Activated CD4-positive, alpha-beta memory T cell treated with anti-CD3 and anti-CD28 coated beads for 36 hours (primary cell): ENCODE measurements at regions of chr2 and their contacts with region 1.

Region 1: DNA sequence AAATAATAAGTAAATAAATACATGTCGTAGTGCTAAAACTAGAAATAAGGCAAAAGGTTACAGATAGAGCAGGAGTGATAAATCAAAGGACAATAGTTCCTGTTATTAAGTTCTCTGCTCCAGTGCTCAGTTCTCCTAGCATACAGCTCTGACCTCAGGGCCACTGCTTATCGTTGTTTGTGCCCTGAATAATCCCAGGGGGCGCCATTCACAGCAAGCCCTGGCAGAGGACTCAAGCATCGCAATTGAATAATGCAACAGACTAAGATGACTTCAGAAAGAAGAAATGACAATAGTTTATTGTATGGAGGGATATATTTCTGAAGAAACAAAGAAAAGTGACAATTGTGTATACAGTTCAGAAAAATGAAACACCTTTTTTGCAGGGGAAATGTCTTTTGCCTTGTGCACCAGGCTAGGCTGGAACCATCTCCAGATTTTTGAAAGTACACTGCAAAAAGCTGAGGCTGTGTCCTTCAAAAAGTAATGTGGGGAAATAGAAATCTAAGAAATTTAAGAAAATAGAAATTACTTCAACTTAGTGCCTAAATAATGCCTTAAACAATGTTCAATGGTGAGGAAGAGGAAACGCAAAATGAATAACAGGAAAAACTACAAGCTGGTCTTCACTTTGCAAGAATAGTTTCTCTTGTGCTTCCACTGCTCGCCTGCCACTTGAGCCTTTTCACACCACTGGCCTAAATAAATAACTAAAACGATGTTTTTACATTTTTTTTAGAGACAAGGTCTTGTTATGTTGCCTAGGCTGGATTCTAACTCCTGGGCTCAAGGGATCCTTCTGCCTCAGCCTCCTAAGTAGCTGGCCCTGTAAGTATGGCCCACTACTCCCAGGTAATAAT is 19.0 kb upstream of the CCNYL1 start:
- DNase-seq: peak; percentile 54
- H3K4me3 Mint-ChIP-seq: no peak overlapping the region
- H3K27ac Mint-ChIP-seq: no peak overlapping the region
- H3K4me1 Mint-ChIP-seq: peaks cover 7% of the 10 kb centered on the region
- H3K27me3 Mint-ChIP-seq: peaks cover 1% of the 10 kb centered on the region

Region 2: DNA sequence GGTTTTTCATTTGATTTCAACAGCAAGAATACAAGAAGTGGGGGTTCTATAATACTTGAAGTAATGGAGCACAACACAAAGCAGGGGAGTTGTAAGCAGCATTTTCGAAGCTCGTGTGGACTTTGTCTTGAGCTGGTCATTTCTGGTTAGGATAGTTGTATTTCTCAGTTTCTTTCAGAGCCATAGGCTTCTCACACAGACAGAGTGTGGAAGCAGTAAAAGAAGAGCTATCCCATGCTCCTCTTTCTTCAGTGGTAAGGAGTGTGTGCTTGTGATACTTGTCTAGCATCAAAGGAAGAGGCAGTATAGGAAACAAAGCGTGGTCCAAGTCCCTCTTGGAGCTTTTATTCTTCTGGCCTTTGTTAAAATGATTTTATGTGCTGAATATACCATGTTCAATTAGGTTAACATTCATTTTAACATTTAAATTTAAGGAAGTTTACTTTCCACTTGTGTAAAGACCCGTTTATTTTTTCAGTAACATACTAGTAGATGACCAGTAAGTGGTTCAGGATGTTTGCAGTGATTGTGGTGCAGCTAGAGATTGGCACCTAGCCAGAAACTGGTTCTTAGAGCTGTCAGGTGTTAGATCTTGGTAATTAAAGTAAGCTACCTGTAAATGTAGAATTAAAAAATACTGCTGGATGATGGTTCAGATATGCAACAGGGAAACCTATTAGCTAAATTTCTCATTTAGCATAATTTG is 33.6 kb after region 1 on chr2:
- CTCF ChIA-PET with region 1: interaction called, 3 read pairs
- POLR2A ChIA-PET with region 1: no interaction called
- intact Hi-C with region 1: loop called (anchors 5 kb)
- DNase-seq: no peak
- H3K4me3 Mint-ChIP-seq: no peak overlapping the region
- H3K27ac Mint-ChIP-seq: no peak overlapping the region
- H3K4me1 Mint-ChIP-seq: peaks cover 37% of the 10 kb centered on the region
- H3K27me3 Mint-ChIP-seq: no peaks in the 10 kb centered on the region

Region 3: DNA sequence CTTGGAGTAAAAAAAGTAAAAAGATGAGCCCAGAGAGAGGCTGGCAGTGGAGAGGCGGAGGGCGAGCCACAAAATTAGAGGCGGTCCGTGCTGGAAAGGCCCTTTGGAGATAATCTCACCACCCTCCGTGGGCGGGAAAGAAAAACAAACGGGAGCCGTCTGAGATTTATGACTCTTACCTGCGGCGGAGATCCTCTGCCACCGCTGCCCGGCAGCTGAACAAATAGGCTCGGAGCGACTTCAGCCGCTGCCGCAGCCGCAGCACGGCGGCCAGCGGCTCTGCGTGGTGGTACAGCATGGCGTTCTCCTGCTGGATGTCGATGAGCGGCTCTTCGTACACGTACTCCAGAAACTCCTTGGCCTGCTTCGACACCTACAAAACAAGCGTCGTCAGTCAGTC is 238.3 kb after region 1 on chr2:
- CTCF ChIA-PET with region 1: no interaction called
- POLR2A ChIA-PET with region 1: no interaction called
- intact Hi-C with region 1: no loop called
- DNase-seq: no peak
- H3K4me3 Mint-ChIP-seq: no peak overlapping the region
- H3K27ac Mint-ChIP-seq: no peak overlapping the region
- H3K4me1 Mint-ChIP-seq: peaks cover 2% of the 10 kb centered on the region
- H3K27me3 Mint-ChIP-seq: no peaks in the 10 kb centered on the region

Region 4: DNA sequence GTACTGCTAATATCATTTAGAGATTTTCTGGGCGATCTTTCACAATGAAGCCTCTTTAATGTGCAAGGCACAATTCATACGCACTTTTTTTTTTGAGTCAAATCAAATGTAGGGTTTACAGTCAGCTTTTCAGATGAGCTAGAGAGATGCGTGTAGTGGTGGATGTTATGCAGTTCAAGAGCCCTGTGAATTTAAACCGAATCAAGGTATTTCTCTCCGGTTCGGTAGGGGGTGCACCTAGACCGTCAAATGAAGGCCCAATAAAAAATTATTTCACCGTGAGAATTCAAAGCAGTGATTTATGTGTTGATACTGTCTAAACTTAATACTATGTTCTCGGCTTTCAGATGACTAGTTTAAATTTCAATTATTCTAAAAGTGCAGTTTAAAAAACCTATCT is 715.2 kb after region 1 on chr2:
- CTCF ChIA-PET with region 1: no interaction called
- POLR2A ChIA-PET with region 1: no interaction called
- intact Hi-C with region 1: no loop called
- DNase-seq: peak; percentile 15
- H3K4me3 Mint-ChIP-seq: no peak overlapping the region
- H3K27ac Mint-ChIP-seq: no peak overlapping the region
- H3K4me1 Mint-ChIP-seq: peaks cover 9% of the 10 kb centered on the region
- H3K27me3 Mint-ChIP-seq: peaks cover 50% of the 10 kb centered on the region